Dorsolateral prefrontal cortex (tissue), 120 donors: ENCODE measurements at regions of chr11 and their contacts with region 1.

Region 1: DNA sequence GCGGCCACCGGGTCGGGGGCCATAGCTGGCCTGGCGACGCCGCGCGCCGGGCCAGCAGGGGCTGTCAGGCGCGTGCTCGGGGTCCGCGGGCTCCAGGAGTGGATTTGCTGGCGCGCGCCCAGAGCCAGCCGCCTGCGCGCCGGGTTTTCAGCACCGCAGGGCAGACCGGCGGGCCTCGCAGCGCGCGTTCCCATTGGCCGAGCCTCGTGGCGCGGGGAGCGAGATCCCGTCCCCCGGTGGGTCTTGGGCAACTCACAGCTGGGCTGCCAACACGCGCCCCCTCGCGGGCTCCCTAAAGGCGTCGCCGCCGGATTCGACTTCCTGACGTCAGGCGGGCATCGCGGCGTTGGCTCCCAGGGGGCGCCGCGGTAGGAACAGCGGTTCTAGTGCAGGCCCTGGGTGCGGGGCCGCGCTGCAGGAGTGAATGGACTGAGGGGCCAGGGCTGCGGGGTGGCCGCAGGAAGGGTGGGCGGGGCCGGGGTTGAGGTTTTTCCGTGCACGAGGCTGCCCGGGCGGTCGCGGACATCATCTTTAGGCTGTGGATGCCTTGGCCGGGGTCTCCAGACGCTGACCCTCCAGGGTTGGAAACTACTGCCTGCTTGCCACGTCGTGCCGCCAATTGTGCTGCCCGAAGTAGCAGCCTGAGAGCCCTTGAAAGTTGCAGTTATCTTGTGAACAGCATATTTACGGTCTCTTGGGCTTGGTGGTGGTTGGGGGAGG is at the start of gene FADS1:
- DNase-seq: peak; percentile 78 to 98 (median 95)
- H3K4me3 ChIP-seq: peak within 1 kb of the TSS; percentile 55 to 99 (median 87)
- H3K27ac ChIP-seq: peak within 1 kb of the TSS; percentile 91 to 100 (median 99)
- H3K27me3 ChIP-seq: no peaks in the 10 kb centered on the region
- CTCF ChIP-seq: peak; percentile 42 to 89 (median 71)
- total RNA-seq, gene FADS1: 47.3 to 195 (median 80.7) TPM

Region 2: GRCh38 chr11:61803889-61804647 is 12.8 kb before region 1 on chr11:
- intact Hi-C with region 1: loop called in 1 of 2 experiments (anchors 2 kb)
- DNase-seq: peak in 1 of 10 donors; percentile 12
- H3K4me3 ChIP-seq: no peak overlapping the region
- H3K27ac ChIP-seq: peak overlapping the region in 11 of 59 donors; percentile 9 to 56 (median 35)
- H3K27me3 ChIP-seq: no peaks in the 10 kb centered on the region
- CTCF ChIP-seq: no peak

Region 3: DNA sequence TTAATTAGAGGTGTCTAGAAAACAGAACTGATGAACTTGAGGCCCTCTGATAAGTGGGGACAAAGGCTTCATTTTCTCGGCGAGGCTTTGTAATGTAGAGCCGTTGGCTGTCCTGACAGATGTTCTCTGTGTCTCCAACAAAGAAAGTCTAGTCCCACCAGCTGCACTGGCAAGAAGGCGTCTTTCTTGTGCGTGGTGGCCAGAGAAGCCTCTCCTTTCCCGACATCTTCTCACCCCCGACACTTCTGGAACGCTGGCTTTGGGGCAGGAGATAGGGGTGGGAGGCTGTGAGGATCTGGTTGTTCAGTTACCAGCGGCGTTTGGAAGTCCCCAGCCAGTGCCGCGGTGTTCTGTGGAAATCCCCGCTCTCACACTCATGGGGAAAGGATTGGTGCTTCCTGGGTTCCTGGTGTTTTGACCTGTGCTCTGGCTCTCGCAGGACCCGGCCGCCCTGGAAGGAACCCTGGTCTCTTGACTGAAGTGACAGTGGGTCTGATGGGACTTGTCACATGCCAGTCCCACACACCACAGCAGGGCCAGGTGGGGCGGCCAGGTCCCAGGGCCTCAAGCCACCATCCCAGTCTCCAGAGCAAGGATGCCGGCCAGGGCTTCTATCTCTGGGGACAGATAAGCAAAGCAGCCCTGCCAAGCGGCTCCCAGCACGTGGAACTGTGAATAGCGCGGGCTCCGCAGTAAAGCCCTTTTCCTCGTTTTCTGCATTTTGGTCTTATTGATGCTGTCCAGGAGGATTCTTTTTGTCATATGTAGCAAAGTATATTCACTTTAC is 34.4 kb after region 1 on chr11:
- intact Hi-C with region 1: loop called in 1 of 2 experiments (anchors 5 kb)
- DNase-seq: peak in 2 of 10 donors; percentile 58 to 59
- H3K4me3 ChIP-seq: peak overlapping the region in 6 of 59 donors; percentile 4 to 42 (median 19)
- H3K27ac ChIP-seq: peak overlapping the region in 54 of 59 donors; percentile 11 to 81 (median 65)
- H3K27me3 ChIP-seq: no peaks in the 10 kb centered on the region
- CTCF ChIP-seq: no peak

Region 4: DNA sequence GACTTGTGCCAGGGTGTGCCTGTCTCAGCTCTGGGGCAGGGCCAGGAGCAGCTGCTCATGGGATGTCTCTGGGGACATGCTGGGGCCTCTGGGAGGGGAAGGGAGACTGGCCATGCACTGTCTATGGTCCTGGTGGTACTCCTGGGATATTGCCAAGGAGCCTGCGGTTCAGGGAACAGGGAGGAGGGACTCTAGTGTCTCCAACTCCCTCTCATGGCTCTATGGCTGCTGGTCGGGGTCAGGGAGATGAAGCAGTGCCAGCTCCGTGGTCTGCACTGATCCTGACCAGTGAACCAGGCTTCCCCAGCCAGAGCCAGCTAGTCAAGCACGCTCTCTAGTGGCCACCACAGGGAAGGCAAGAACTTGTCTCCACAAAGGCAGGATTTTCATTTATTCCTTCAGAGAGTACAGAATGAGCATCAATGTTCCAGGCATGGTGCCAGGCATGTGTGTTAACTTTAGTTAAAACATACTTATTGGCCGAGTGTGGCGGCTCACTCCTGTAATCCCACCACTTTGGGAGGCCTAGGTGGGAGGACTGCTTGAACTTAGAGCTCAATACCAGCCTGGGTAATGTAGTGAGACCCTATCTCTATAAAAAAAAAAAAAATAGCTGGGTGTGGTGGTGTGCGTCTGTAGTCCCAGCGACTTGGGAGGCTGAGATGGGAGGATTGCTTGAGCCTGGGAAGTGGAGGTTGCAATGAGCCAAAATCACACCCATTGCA is 130.8 kb after region 1 on chr11:
- intact Hi-C with region 1: loop called in 1 of 2 experiments (anchors 5 kb)
- DNase-seq: peak; percentile 77 to 95 (median 88)
- H3K4me3 ChIP-seq: no peak overlapping the region
- H3K27ac ChIP-seq: peak overlapping the region in 58 of 59 donors; percentile 52 to 100 (median 97)
- H3K27me3 ChIP-seq: no peaks in the 10 kb centered on the region
- CTCF ChIP-seq: peak; percentile 84 to 97 (median 94)

Region 5: DNA sequence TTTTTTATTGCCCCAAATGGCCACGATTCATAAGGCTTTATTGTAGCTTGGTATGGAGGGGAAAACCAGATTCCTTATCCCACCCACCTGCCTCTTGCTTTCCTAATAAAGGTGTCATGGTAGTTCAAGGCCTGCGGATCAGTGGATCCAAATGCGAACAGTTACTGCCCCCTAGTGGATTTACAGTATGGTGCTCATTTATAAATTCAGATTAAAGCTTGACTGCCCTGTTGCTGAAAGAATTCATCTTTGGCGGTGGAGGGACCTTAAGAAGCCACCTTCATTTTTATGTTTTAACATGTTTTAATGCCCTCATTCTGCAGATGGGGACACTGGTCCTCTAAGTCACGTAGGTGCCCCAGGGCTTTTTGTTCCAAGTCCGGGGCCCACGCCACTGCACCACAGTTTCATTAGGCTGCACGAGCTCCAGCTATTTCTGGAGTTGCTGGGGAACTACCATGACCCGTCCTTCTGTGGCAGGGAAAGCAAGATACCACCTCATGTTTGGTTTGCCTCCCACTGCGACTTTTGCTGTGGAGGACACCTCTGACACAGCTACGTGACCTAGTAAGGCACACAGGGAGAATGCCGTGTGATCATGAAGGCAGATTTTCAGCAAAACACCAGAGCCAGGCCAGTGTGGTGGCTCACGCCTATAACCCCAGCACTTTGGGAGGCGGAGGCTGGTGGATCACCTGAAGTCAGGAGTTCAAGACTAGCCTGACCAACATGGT is 291.3 kb after region 1 on chr11:
- intact Hi-C with region 1: loop called in 1 of 2 experiments (anchors 5 kb)
- DNase-seq: peak in 1 of 10 donors; percentile 49
- H3K4me3 ChIP-seq: no peak overlapping the region
- H3K27ac ChIP-seq: peak overlapping the region in 7 of 59 donors; percentile 4 to 47 (median 31)
- H3K27me3 ChIP-seq: no peaks in the 10 kb centered on the region
- CTCF ChIP-seq: peak; percentile 68 to 98 (median 90)